Activated T-helper 2 cell treated with anti-CD3 and anti-CD28 coated beads, Interferon-gamma antibody, Interleukin-2, Interleukin-4, amounts not matched to agents 10 μg/mL and 5 μg/mL and 100 μg/mL, durations not matched to agents 14 hours and 24 hours and 36 hours (primary cell): ENCODE measurements at regions of chr19 and their contacts with region 1.

Region 1: GRCh38 chr19:21505459-21506451 is at the start of gene ZNF429:
- DNase-seq: peak; percentile 86
- H3K4me3 Mint-ChIP-seq: peak within 1 kb of the TSS; percentile 100
- H3K27ac Mint-ChIP-seq: peak within 1 kb of the TSS; percentile 95
- H3K4me1 Mint-ChIP-seq: peaks cover 12% of the 10 kb centered on the region
- H3K27me3 Mint-ChIP-seq: no peaks in the 10 kb centered on the region
- total RNA-seq, gene ZNF429: 3.1 and 5.0 TPM in 2 replicates

Region 2: DNA sequence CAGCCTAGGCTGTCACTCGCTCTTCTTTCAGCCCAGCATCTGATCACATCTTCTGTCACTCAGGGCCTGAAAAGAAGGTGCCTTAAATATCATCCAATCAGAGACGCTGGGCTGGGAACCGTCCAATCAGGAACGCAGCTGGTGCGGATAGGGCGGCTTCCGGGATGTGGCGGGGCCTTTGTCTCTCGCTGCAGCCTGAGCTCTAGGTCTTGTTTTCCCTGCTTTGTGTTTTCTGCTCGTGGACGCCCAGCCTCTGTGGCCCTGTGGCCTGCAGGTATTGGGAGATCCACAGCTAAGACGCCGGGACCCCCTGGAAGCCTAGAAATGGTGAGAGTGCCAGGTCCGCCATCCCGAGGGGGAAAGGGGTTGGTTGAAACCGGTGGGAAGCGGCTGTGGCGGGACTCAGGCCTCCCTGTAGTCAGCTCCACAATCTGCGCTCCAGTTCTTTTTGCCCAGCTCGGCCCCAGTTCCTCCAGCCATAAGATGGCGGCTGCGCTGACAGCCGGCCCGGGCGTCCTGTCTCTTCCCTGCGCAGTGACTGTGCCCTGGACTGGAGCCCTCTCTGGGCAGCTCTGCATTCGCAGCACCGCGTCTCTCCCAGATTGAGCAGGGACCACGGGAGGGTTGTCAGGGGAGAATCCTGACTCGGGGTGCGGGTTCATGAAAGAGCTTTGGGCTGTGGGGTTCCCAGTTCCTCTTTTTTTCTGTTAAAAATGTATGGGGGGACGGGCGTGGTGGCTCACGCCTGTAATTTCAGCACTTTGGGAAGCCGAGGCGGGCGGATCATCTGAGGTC is 582.5 kb before region 1 on chr19 and contains the start of gene ZNF85:
- intact Hi-C with region 1: loop called (anchors 1 kb)
- DNase-seq: peak; percentile 87
- H3K4me3 Mint-ChIP-seq: peak within 1 kb of the TSS; percentile 95
- H3K27ac Mint-ChIP-seq: peak within 1 kb of the TSS; percentile 96
- H3K4me1 Mint-ChIP-seq: peaks cover 6% of the 10 kb centered on the region
- H3K27me3 Mint-ChIP-seq: no peaks in the 10 kb centered on the region
- total RNA-seq, gene ZNF85: 8.2 and 10.1 TPM in 2 replicates

Region 3: DNA sequence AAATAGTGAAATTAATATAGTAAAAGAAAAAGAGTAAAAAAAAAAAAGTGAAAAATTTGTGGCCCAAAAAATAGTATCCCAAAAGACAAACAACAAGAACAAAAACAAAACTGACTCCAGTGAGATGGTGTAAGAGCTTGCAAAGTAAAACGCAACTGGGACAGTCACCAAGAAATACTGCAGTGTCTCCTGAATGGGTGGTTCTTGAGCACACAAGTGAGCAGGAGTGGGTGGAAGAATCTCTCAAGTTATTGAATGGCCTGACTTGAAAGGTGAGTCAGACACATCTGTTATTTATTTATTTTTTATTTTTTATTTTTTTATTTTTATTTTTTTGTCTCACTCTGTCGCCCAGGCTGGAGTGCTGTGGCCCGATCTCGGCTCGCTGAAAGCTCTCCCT is 106.9 kb before region 1 on chr19:
- intact Hi-C with region 1: no loop called
- DNase-seq: no peak
- H3K4me3 Mint-ChIP-seq: no peak overlapping the region
- H3K27ac Mint-ChIP-seq: no peak overlapping the region
- H3K4me1 Mint-ChIP-seq: peaks cover 15% of the 10 kb centered on the region
- H3K27me3 Mint-ChIP-seq: no peaks in the 10 kb centered on the region

Region 4: GRCh38 chr19:21568816-21569493 is 63.2 kb after region 1 on chr19:
- intact Hi-C with region 1: loop called (anchors 1 kb)
- DNase-seq: peak; percentile 77
- H3K4me3 Mint-ChIP-seq: peak overlapping the region; percentile 97
- H3K27ac Mint-ChIP-seq: peak overlapping the region; percentile 96
- H3K4me1 Mint-ChIP-seq: peaks cover 6% of the 10 kb centered on the region
- H3K27me3 Mint-ChIP-seq: no peaks in the 10 kb centered on the region

Region 5: GRCh38 chr19:21835810-21836444 is 330.2 kb after region 1 on chr19 and contains the start of gene ZNF43:
- intact Hi-C with region 1: loop called (anchors 5 kb)
- DNase-seq: peak; percentile 89
- H3K4me3 Mint-ChIP-seq: peak within 1 kb of the TSS; percentile 94
- H3K27ac Mint-ChIP-seq: peak within 1 kb of the TSS; percentile 98
- H3K4me1 Mint-ChIP-seq: peaks cover 11% of the 10 kb centered on the region
- H3K27me3 Mint-ChIP-seq: no peaks in the 10 kb centered on the region
- total RNA-seq, gene ZNF43: 33.5 and 34.9 TPM in 2 replicates